ENCODE measurements at regions of chr4 and their contacts with region 1.

Region 1: DNA sequence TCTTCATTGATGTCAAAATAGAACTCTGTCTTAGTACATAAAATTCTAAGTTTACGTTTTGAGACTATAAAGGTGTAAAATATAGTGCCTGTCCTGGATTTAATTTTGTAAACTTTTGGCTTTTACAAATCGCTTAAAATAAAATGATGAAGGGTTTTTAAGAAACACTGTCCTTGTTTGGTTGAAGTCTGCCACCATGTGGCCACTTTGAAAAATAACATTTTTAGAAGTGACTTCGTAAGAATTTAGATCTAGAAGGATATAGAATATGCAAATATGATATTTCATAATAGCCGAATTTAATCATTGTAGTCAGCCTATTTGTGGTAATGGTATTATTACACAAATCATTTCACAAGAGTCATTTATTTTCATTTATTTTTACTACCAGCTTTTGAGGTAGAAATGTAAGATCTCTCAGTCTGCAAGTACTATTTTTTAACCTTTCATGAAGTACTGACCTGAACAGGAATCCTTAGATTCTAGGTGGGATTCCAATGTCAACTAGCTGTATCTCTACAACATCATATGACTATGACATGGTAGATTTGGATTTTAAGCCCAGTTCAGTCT is 31.0 kb upstream of the FAT4 start:
- DNase-seq: peak in 1 of 2 experiments; percentile 66
- H3K4me3 ChIP-seq: no peak overlapping the region
- H3K4me1 ChIP-seq: no peaks in the 10 kb centered on the region
- H3K27me3 ChIP-seq: no peaks in the 10 kb centered on the region

Region 2: DNA sequence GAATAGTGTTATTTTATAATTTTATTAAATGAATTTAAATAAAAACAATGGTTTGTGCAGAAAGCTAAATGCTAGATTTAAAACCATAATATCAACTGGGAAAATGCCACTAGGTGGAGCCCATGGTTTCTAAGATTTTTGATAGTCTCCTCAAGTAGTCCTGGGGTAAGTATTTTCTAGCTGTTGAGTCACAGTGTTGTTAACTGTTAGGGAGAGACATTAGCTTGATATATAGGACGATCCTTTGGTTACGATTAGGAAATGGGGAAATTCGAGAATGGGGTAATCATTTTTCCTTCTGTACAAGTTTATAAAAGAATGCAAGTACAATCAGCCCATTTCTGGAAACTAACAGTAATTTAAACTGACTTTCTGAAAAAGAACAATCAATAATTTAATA is 949.7 kb before region 1 on chr4:
- in situ Hi-C with region 1: loop called (anchors 25 kb)
- DNase-seq: peak; percentile 61 to 73
- H3K4me3 ChIP-seq: no peak overlapping the region
- H3K4me1 ChIP-seq: no peaks in the 10 kb centered on the region
- H3K27me3 ChIP-seq: no peaks in the 10 kb centered on the region

Region 3: DNA sequence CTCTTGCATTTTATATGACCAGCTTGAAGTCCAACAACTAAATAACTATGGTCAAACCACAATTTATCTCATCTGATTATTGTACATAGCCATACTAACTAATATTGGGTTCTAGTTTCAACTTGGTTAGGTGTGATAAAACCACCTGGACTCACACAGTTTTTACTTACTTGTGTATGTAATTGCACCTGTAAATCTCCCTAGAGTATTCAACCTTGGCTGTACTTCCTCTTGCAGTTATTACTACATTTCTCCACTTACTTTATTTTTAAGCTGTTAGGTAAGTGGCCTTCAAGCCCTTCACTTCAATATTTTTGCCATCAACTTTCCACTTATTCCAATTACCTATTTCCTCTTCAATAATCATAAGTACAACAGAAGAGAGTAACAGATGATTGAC is 455.4 kb before region 1 on chr4:
- in situ Hi-C with region 1: no loop called
- DNase-seq: no peak
- H3K4me3 ChIP-seq: no peak overlapping the region
- H3K4me1 ChIP-seq: no peaks in the 10 kb centered on the region
- H3K27me3 ChIP-seq: no peaks in the 10 kb centered on the region

Region 4: GRCh38 chr4:125115476-125115875 is 168.3 kb before region 1 on chr4:
- in situ Hi-C with region 1: no loop called
- DNase-seq: no peak
- H3K4me3 ChIP-seq: no peak overlapping the region
- H3K4me1 ChIP-seq: no peaks in the 10 kb centered on the region
- H3K27me3 ChIP-seq: no peaks in the 10 kb centered on the region

Region 5: DNA sequence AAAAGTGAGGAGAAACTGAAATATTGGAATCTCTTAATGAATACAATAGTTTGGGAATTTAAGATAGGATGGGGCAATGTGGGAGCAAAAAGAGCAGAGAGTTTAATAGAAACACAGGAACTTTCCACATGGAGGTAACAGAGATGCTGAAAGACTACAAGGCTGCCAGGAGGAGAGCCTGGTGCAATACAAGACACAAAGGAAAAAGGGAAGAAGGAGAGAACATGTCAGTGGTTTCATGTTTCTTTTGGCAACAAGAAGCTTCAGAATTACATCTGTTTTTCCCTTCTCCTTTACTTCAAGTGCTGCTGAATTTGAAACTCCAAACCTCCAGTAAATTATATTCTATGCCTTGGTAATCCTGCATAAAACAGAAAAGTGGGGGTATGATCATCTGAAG is 505.2 kb after region 1 on chr4:
- in situ Hi-C with region 1: no loop called
- DNase-seq: no peak
- H3K4me3 ChIP-seq: no peak overlapping the region
- H3K4me1 ChIP-seq: no peaks in the 10 kb centered on the region
- H3K27me3 ChIP-seq: no peaks in the 10 kb centered on the region